IMR-90 (cell line): ENCODE measurements at regions of chr13 and their contacts with region 1.

Region 1: GRCh38 chr13:23466144-23467002 is 32.9 kb upstream of the SACS start:
- DNase-seq: peak; percentile 86
- ATAC-seq: peak; percentile 89
- H3K4me3 ChIP-seq: peak overlapping the region; percentile 41
- H3K27ac ChIP-seq: peak overlapping the region; percentile 98
- H3K4me1 ChIP-seq: peaks cover 15% of the 10 kb centered on the region
- H3K27me3 ChIP-seq: no peaks in the 10 kb centered on the region
- CTCF ChIP-seq: peak; percentile 79
- POLR2A ChIP-seq: 0 out of 2 replicates have a peak, but pooled peaks have one; percentile 27
- RAD21 ChIP-seq: peak; percentile 84

Region 2: DNA sequence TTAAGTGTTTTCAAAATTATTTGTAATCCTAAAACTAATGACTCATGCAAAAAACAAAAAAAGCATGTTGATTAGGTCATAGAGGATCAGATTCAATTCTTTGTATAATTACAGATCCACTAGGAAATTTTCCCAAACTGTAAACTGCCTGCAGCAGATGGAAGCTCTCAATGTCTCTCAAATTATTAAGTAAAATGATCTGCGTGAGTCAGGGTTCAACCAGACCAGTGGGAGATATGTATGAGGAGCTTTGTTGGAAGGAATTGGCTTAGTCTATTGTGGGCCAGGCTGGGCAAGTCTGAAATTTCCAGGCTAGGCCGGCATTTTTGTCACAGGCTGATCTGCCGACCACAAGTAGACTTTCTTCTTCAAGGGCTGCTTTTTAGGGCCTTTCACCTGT is 18.4 kb before region 1 on chr13:
- CTCF ChIA-PET with region 1: no interaction called
- POLR2A ChIA-PET with region 1: no interaction called
- dilution Hi-C with region 1: no loop called
- in situ Hi-C with region 1: no loop called
- intact Hi-C with region 1: loop called (anchors 1 kb)
- DNase-seq: peak; percentile 96
- ATAC-seq: peak; percentile 96
- H3K4me3 ChIP-seq: no peak overlapping the region
- H3K27ac ChIP-seq: peak overlapping the region; percentile 83
- H3K4me1 ChIP-seq: peaks cover 4% of the 10 kb centered on the region; the same call in 1 of the 2 replicates
- H3K27me3 ChIP-seq: no peaks in the 10 kb centered on the region
- CTCF ChIP-seq: no peak
- POLR2A ChIP-seq: no peak
- RAD21 ChIP-seq: no peak

Region 3: GRCh38 chr13:23534090-23534489 is 67.7 kb after region 1 on chr13:
- CTCF ChIA-PET with region 1: no interaction called
- POLR2A ChIA-PET with region 1: no interaction called
- dilution Hi-C with region 1: no loop called
- in situ Hi-C with region 1: no loop called
- intact Hi-C with region 1: no loop called
- DNase-seq: no peak
- ATAC-seq: no peak
- H3K4me3 ChIP-seq: no peak overlapping the region
- H3K27ac ChIP-seq: no peak overlapping the region
- H3K4me1 ChIP-seq: no peaks in the 10 kb centered on the region
- H3K27me3 ChIP-seq: no peaks in the 10 kb centered on the region
- CTCF ChIP-seq: no peak
- POLR2A ChIP-seq: no peak
- RAD21 ChIP-seq: no peak

Region 4: GRCh38 chr13:23547000-23547590 is 80.7 kb after region 1 on chr13:
- CTCF ChIA-PET with region 1: no interaction called
- POLR2A ChIA-PET with region 1: interaction called, 13 read pairs
- dilution Hi-C with region 1: no loop called
- in situ Hi-C with region 1: no loop called
- intact Hi-C with region 1: no loop called
- DNase-seq: peak; percentile 7
- ATAC-seq: peak; percentile 79
- H3K4me3 ChIP-seq: peak overlapping the region; percentile 58
- H3K27ac ChIP-seq: peak overlapping the region; percentile 77
- H3K4me1 ChIP-seq: peaks cover 5% of the 10 kb centered on the region; the same call in 1 of the 2 replicates
- H3K27me3 ChIP-seq: no peaks in the 10 kb centered on the region
- CTCF ChIP-seq: no peak
- POLR2A ChIP-seq: no peak
- RAD21 ChIP-seq: no peak

Region 5: GRCh38 chr13:23579072-23579895 is 112.9 kb after region 1 on chr13:
- CTCF ChIA-PET with region 1: interaction called, 4 read pairs
- POLR2A ChIA-PET with region 1: no interaction called
- dilution Hi-C with region 1: no loop called
- in situ Hi-C with region 1: loop called (anchors 5 kb)
- intact Hi-C with region 1: loop called (anchors 2 kb)
- DNase-seq: peak; percentile 87
- ATAC-seq: peak; percentile 98
- H3K4me3 ChIP-seq: peak overlapping the region; percentile 91
- H3K27ac ChIP-seq: peak overlapping the region; percentile 79
- H3K4me1 ChIP-seq: peaks cover 4% of the 10 kb centered on the region
- H3K27me3 ChIP-seq: no peaks in the 10 kb centered on the region
- CTCF ChIP-seq: no peak
- POLR2A ChIP-seq: peak; percentile 26
- RAD21 ChIP-seq: no peak

Region 6: GRCh38 chr13:23707674-23708073 is 241.3 kb after region 1 on chr13:
- CTCF ChIA-PET with region 1: interaction called, 4 read pairs
- POLR2A ChIA-PET with region 1: no interaction called
- dilution Hi-C with region 1: no loop called
- in situ Hi-C with region 1: no loop called
- intact Hi-C with region 1: loop called (anchors 2 kb)
- DNase-seq: peak; percentile 49
- ATAC-seq: no peak
- H3K4me3 ChIP-seq: no peak overlapping the region
- H3K27ac ChIP-seq: peak overlapping the region; percentile 5; the same call in 1 of the 2 replicates
- H3K4me1 ChIP-seq: peaks cover 21% of the 10 kb centered on the region
- H3K27me3 ChIP-seq: no peaks in the 10 kb centered on the region
- CTCF ChIP-seq: peak; percentile 52
- POLR2A ChIP-seq: no peak
- RAD21 ChIP-seq: peak; percentile 59

Region 7: DNA sequence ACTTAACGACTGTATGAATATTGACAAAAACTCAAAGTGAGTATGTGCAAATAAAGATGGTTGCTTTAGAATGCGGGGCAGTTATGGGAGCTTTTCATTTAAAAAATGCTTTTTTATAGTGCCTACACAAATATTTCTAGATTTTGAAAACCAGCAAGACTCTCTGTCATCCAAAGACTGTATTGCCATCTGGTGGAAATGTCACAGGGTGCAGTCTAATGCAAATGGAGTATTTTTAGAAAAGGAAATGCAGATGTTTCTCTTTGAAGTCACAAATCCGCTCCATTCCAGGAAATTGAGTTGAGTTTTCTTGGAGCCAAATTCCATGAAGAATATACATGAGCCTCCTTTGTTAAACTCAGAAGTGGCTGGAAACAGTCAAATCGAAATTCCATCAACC is 433.2 kb after region 1 on chr13:
- CTCF ChIA-PET with region 1: interaction called, 7 read pairs
- POLR2A ChIA-PET with region 1: no interaction called
- dilution Hi-C with region 1: no loop called
- in situ Hi-C with region 1: no loop called
- intact Hi-C with region 1: loop called (anchors 2 kb)
- DNase-seq: peak; percentile 74
- ATAC-seq: peak; percentile 51
- H3K4me3 ChIP-seq: no peak overlapping the region
- H3K27ac ChIP-seq: peak overlapping the region; percentile 78; the same call in 1 of the 2 replicates
- H3K4me1 ChIP-seq: peaks cover 14% of the 10 kb centered on the region
- H3K27me3 ChIP-seq: no peaks in the 10 kb centered on the region
- CTCF ChIP-seq: peak; percentile 74
- POLR2A ChIP-seq: no peak
- RAD21 ChIP-seq: peak; percentile 68